Astrocyte of the cerebellum (primary cell): ENCODE measurements at regions of chr10 and their contacts with region 1.

Region 1: DNA sequence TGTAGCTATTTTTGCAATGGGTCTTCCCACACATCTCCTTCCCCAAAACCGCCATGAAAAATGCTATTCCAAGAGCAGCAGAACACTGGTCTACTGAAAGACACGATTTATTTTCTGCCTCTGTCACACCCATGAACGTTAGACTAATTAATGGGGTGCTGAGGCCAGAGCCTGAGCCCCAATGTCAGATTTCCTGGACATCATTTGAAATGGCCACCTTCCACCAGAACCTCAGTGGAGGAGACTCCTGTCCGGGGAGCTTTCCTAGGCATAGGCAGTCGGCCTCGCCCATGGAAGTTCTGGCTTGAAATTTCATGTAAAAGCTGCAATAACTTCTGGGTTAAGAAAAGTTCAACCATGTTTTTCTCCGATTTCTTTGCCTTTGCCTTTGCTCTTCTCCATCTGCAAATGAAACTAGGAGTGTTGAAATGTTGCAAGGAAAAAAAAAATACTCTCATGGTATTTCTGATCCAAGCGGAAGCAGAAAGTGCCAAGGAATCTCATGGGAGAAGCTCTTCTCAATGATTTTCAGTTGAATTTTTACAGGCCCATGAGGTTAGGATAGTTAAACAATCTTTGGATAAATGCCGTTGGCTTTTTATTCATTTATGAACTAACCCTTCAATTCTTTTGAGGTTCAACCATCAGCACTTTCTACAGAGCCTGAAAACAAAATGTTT is 570.8 kb upstream of the MGMT start:
- DNase-seq: no peak
- H3K4me3 ChIP-seq: no peak overlapping the region
- CTCF ChIP-seq: no peak

Region 2: DNA sequence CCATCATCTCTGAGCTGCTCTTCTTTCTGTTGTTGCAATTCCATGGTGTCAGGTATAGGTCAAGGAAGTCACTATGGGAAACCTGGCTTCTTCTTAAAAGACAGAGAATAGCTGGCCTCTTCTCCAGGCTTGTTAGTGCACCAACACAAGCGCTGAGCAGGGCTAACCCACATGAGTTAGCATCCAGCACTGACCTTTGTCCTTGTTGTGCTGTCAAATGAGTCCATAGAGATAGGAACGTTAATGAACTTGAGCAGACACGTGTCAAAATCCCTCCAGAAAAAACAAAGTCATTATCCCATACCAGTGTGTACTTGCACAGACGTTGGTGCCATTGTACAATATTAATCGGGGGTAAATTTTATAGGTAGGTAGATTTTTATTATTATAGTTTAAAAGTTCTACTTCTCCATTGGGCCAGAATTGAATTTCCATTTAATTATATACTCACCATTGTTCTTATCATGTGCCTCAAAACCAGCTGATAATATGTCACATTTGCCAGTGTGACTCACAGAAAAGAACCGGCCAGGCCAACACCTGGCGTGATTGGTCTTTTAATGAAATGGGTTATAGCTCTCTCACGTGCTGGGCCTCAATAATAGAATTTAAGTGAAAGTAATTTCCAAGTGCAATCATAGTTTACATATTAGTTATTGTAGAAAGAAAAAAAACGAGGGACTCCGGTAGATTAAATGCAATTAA is 102.0 kb after region 1 on chr10:
- in situ Hi-C with region 1: loop called (anchors 5 kb)
- DNase-seq: no peak
- H3K4me3 ChIP-seq: no peak overlapping the region
- CTCF ChIP-seq: no peak